Endothelial cell of umbilical vein (primary cell): ENCODE measurements at regions of chr13 and their contacts with region 1.

Region 1: DNA sequence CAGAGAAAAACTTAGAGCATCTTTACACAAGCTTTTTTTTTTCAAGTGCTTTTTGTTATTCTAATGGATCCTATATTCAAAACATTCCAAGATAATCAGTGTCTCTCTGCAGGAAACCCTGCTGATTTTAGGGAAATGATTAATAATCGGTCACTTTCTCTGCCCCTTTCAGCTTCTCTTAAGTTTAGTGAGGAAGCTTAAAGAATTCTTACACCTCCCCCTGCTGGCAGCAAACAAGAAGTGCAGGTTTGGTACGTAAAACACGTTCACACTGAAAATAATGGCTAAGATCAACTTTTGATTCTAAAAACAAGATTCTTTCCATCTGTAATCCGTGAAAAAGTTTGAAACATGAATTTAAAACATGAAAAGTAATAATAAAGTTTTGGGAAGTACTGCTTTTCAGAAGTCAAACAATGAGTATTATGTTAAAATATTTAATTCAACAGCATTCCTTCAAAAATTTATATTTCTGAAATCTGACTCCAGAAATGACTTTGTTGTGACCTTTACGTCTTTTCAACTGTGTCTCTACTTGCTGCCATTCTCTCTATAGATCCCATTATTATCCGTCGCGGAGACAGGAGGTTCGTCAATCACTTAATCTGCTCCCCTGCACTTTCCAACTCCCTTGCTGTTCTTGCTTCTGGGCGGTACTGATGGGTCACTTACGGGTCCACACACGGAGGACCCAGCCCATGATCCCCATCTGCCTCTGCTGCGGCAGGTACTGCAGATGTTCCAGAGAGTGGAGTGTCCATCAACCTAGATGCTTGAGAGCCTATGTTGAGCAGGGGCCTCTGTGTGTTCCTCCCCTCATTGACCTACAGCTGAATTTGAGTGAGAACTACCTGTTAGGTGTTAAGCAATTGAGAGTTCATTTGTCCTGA is 203.1 kb upstream of the EDNRB start:
- DNase-seq: peak; percentile 82
- H3K4me3 ChIP-seq: no peak overlapping the region
- H3K27ac ChIP-seq: no peak overlapping the region
- H3K4me1 ChIP-seq: peaks cover 8% of the 10 kb centered on the region
- H3K27me3 ChIP-seq: peaks cover 0 to under 1% of the 10 kb centered on the region in 2 experiments
- CTCF ChIP-seq: peak; percentile 62 to 68
- POLR2A ChIP-seq: no peak

Region 2: DNA sequence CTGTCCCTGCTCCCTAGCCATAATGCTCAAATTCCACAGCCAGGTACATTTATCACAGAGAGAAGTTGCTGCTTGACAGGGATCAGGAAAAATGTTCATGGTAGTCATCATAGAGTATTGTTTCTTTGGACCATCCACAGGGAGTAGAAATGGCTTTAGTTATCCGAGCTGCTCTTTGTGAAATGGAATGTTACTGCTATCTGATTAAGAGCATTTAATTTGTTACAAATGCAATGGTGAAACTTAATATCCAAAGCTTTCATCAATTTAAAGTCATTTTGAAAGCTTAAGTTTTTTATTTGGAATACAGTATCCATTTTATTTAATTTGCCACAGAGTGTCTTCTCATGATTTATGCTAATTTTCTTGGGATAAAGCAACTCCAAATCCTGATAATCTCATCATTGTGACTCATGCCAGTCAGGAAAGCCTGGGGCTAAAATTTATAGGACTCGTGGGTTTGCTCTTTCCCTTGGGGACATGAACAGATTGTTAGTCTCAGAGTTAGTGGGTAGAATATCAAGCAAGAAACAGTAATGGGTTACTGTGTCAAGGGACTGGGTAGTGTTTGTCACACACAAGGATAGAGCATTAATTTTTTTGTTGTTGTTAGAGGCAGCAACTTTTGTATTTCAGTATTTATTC is 526.4 kb before region 1 on chr13:
- CTCF ChIA-PET with region 1: interaction called, 11 read pairs
- POLR2A ChIA-PET with region 1: no interaction called
- dilution Hi-C with region 1: no loop called
- intact Hi-C with region 1: loop called (anchors 1 kb)
- DNase-seq: no peak
- H3K4me3 ChIP-seq: no peak overlapping the region
- H3K27ac ChIP-seq: no peak overlapping the region
- H3K4me1 ChIP-seq: no peaks in the 10 kb centered on the region
- H3K27me3 ChIP-seq: peaks cover 0 to 8% of the 10 kb centered on the region in 2 experiments
- CTCF ChIP-seq: no peak
- POLR2A ChIP-seq: no peak

Region 3: GRCh38 chr13:77789376-77789775 is 332.3 kb before region 1 on chr13:
- CTCF ChIA-PET with region 1: interaction called, 149 read pairs
- POLR2A ChIA-PET with region 1: no interaction called
- dilution Hi-C with region 1: no loop called
- intact Hi-C with region 1: no loop called
- DNase-seq: no peak
- H3K4me3 ChIP-seq: no peak overlapping the region
- H3K27ac ChIP-seq: no peak overlapping the region
- H3K4me1 ChIP-seq: no peaks in the 10 kb centered on the region
- H3K27me3 ChIP-seq: no peaks in the 10 kb centered on the region
- CTCF ChIP-seq: no peak
- POLR2A ChIP-seq: no peak

Region 4: DNA sequence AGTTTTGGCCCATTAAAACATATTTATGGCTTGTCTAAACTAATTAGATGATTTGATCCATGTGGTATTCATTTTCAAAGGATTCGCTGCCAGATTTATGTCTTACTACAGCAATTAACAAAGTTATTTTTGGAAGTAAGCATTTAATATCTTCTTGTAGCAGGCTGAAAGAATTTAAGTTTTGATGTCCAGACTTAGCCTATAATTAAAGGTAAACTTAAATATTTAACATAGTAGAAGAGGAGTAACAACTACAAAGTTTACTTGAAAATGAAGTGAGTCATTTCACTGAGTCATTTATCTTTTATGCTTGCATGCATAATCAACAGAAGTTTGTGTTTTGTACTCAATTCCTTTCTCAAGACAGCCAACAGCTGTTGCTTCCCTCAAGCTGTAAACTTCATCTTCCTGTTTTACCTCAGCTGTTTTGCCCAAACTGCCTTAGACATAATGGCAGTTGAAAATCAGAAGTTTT is 261.2 kb before region 1 on chr13:
- CTCF ChIA-PET with region 1: interaction called, 10 read pairs
- POLR2A ChIA-PET with region 1: no interaction called
- dilution Hi-C with region 1: no loop called
- intact Hi-C with region 1: no loop called
- DNase-seq: peak; percentile 64
- H3K4me3 ChIP-seq: no peak overlapping the region
- H3K27ac ChIP-seq: no peak overlapping the region
- H3K4me1 ChIP-seq: peaks cover 4% of the 10 kb centered on the region
- H3K27me3 ChIP-seq: no peaks in the 10 kb centered on the region
- CTCF ChIP-seq: no peak
- POLR2A ChIP-seq: no peak

Region 5: DNA sequence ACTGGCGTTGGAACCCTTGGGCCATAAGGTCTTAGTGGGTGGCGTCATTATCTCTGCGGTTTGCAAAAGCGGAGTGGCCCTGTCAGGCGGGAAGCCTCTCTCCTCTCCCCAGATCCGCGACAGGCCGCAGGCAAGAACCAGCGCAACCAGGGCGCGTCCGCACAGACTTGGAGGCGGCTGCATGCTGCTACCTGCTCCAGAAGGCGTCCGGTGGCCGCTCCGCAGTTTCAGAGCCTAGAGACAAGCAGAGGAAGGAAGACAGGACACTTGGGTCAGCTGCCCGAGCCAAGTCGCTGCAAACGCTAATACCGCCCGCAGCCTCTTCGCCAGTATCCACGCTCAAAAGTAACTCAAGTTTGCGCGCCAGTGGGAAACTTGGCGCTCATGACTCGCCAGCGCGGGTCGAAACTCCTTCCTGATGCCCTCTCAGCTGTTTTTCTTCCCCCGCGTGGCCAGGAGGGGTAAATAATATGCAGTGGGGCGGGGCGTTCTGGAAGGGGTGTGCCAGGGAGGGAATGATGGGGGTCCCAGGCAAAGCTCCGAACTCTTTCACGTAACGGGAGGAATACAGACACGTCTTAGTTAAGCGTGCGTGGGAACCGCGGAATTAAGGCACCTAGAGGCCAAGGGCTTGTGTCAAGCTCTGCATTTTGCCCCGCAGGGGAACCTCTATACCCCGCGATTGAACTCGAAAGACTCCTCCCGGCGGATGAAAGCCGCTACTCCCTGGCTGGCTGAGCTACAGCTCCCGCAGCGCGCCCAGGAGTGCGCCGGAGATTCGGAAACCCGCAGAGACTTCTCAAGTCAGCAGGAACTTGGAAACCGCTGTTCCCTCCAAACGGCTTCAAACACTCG is 203.1 kb before region 1 on chr13 and contains the start of gene EDNRB:
- CTCF ChIA-PET with region 1: interaction called, 60 read pairs
- POLR2A ChIA-PET with region 1: interaction called, 3 read pairs
- dilution Hi-C with region 1: no loop called
- intact Hi-C with region 1: loop called (anchors 1 kb)
- DNase-seq: peak; percentile 66
- H3K4me3 ChIP-seq: peak within 1 kb of the TSS; percentile 67 to 71 (median 67)
- H3K27ac ChIP-seq: no peak within 1 kb of the TSS
- H3K4me1 ChIP-seq: peaks cover 10% of the 10 kb centered on the region
- H3K27me3 ChIP-seq: no peaks in the 10 kb centered on the region
- CTCF ChIP-seq: peak; percentile 5 to 30
- POLR2A ChIP-seq: no peak
- total RNA-seq, gene EDNRB: 2.3 and 2.6 TPM in 2 replicates

Region 6: DNA sequence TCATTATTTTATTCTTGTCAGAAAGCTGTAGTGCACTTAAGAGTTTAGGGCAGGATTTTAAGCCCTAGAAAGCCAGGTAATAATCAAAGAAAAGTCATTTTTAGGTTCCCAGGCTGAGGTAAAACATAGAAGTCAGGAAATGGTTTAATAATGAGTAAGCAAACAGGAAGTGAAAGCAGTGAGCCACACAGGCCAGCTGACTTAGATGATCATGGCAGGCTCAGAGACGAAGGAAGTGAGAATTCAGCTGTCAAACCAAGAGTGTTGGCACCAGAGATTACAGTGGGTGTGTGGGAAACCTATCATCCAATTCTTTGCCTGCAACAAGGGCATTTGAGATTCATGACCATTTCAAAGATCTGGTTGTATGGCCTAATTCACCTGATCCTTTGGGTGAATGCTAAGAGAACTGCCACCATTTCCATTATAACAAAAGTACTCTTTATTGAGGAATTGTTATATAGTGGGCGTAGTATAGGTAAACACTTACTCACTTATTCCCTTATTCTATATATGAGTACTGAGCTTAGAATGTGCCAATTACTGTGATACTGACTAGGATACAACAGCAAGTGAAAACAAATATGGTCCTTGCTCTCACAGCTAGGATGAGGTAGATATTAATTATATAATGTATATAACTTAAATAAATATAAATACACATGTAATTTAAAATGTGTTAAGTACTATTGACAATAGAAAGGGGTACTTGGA is 99.4 kb before region 1 on chr13:
- CTCF ChIA-PET with region 1: interaction called, 11 read pairs
- POLR2A ChIA-PET with region 1: no interaction called
- dilution Hi-C with region 1: no loop called
- intact Hi-C with region 1: loop called (anchors 1 kb)
- DNase-seq: peak; percentile 95
- H3K4me3 ChIP-seq: no peak overlapping the region
- H3K27ac ChIP-seq: peak overlapping the region; percentile 72
- H3K4me1 ChIP-seq: peaks cover 25% of the 10 kb centered on the region
- H3K27me3 ChIP-seq: no peaks in the 10 kb centered on the region
- CTCF ChIP-seq: no peak
- POLR2A ChIP-seq: no peak

Region 7: DNA sequence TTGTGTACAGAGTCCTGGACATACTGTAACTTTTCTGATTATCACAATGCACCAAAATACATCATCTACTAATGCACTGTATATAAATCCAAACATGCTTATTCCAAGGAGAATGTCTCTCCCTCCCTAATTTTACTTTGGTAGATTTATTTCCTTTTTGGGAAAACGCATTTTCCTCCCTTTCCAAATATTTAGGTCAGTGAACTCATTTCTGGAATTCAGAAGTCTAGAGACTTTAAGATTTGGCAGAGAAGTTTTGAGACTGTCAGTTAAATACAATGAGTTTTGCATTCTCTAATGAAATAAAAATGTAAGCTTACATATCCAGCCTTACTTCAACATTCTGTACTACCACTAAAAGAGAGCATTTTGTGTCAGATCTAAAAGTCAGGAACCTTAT is 37.3 kb before region 1 on chr13:
- CTCF ChIA-PET with region 1: no interaction called
- POLR2A ChIA-PET with region 1: no interaction called
- dilution Hi-C with region 1: no loop called
- intact Hi-C with region 1: no loop called
- DNase-seq: no peak
- H3K4me3 ChIP-seq: no peak overlapping the region
- H3K27ac ChIP-seq: no peak overlapping the region
- H3K4me1 ChIP-seq: no peaks in the 10 kb centered on the region
- H3K27me3 ChIP-seq: no peaks in the 10 kb centered on the region
- CTCF ChIP-seq: no peak
- POLR2A ChIP-seq: no peak

Region 8: DNA sequence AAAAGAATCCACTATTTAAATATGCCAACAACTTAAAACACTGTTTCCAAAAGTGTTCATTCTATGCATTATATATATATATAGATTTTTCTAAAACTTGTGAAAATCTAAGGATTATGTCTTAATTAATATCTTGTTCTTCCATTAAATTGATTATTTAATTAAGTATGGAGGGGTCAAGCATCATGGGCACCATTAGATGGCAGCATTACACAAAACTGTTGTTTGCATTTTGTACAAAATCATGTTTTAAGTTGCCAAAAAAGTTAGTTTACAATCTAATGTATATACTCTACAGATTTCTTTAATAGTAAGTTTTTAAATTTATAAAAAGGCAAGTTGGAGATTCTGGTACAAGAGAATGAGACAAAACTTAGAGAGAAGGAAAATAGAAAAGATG is 10.1 kb after region 1 on chr13:
- CTCF ChIA-PET with region 1: interaction called, 23 read pairs
- POLR2A ChIA-PET with region 1: no interaction called
- dilution Hi-C with region 1: no loop called
- intact Hi-C with region 1: no loop called
- DNase-seq: peak; percentile 39
- H3K4me3 ChIP-seq: no peak overlapping the region
- H3K27ac ChIP-seq: no peak overlapping the region
- H3K4me1 ChIP-seq: no peaks in the 10 kb centered on the region
- H3K27me3 ChIP-seq: peaks cover 14% of the 10 kb centered on the region in 2 experiments
- CTCF ChIP-seq: peak; percentile 21 to 24
- POLR2A ChIP-seq: no peak

Region 9: GRCh38 chr13:78176880-78177279 is 55.2 kb after region 1 on chr13:
- CTCF ChIA-PET with region 1: no interaction called
- POLR2A ChIA-PET with region 1: no interaction called
- dilution Hi-C with region 1: no loop called
- intact Hi-C with region 1: no loop called
- DNase-seq: no peak
- H3K4me3 ChIP-seq: no peak overlapping the region
- H3K27ac ChIP-seq: no peak overlapping the region
- H3K4me1 ChIP-seq: no peaks in the 10 kb centered on the region
- H3K27me3 ChIP-seq: no peaks in the 10 kb centered on the region
- CTCF ChIP-seq: no peak
- POLR2A ChIP-seq: no peak

Region 10: DNA sequence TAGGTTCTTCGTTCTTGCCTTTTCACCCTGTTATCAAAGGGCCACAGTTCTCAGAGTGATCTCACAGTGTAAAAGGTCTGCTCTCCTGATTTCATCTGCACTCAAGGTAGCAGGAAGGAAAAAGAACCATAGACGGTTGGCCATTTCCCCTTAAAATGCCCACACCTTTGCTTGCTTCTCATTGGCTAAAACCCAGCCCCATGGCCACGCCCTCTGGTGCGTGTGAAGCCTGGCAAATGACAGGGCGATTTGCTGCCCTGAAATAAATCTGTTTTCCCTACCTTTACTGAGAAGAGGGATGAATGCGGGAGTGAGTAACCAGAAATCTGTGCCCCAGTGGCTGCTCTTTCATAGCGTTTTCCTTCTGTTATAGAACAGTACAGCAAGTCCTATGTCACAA is 212.4 kb after region 1 on chr13:
- CTCF ChIA-PET with region 1: no interaction called
- POLR2A ChIA-PET with region 1: no interaction called
- dilution Hi-C with region 1: no loop called
- intact Hi-C with region 1: no loop called
- DNase-seq: no peak
- H3K4me3 ChIP-seq: no peak overlapping the region
- H3K27ac ChIP-seq: no peak overlapping the region
- H3K4me1 ChIP-seq: no peaks in the 10 kb centered on the region
- H3K27me3 ChIP-seq: no peaks in the 10 kb centered on the region
- CTCF ChIP-seq: no peak
- POLR2A ChIP-seq: no peak

Region 11: GRCh38 chr13:78409172-78409571 is 287.5 kb after region 1 on chr13:
- CTCF ChIA-PET with region 1: no interaction called
- POLR2A ChIA-PET with region 1: no interaction called
- dilution Hi-C with region 1: no loop called
- intact Hi-C with region 1: no loop called
- DNase-seq: no peak
- H3K4me3 ChIP-seq: no peak overlapping the region
- H3K27ac ChIP-seq: no peak overlapping the region
- H3K4me1 ChIP-seq: no peaks in the 10 kb centered on the region
- H3K27me3 ChIP-seq: no peaks in the 10 kb centered on the region
- CTCF ChIP-seq: no peak
- POLR2A ChIP-seq: no peak